Ascending aorta (tissue), 2 donors: ENCODE measurements at regions of chr3 and their contacts with region 1.

Region 1: DNA sequence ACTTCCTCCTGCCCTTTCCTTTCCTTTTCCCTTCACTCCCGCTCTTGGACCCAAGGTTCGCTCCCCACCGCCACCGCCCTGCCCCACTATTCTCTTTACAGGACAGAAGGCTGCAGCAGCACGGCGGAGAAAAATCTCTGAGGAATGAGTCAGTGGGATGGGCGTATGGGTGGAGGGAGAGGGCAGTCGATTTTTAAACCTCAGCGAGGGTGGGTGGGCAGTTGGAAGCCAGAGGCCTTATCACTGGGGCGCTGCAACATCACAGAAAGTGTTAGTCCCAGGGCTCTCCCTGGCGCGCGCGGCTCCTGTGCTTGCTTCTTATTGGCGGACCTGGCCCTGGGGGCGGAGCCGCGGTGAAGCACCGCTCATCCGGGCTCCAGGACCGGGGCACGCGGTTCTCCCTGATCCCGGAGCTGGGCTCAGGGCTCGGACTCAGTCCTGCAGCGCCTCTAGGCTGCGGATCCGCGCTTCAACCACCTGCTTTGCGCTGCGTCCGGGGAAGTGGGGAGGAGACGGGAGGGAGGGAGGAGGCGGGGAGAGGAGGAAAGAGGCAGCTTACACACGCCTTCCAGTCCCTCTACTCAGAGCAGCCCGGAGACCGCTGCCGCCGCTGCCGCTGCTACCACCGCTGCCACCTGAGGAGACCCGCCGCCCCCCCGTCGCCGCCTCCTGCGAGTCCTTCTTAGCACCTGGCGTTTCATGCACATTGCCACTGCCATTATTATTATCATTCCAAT is at the start of gene ALCAM:
- DNase-seq: peak; percentile 94 to 98
- H3K4me3 ChIP-seq: peak within 1 kb of the TSS; percentile 82 to 88
- H3K27ac ChIP-seq: peak within 1 kb of the TSS; percentile 91 to 96
- H3K4me1 ChIP-seq: peaks cover 0 to 29% of the 10 kb centered on the region in 2 donors
- H3K27me3 ChIP-seq: no peaks in the 10 kb centered on the region
- CTCF ChIP-seq: peak; percentile 69 to 82 (median 81)
- total RNA-seq, gene ALCAM: 26.1 TPM

Region 2: GRCh38 chr3:104273046-104273649 is 1093.3 kb before region 1 on chr3:
- intact Hi-C with region 1: loop called (anchors 1 kb)
- DNase-seq: no peak
- H3K4me3 ChIP-seq: no peak overlapping the region
- H3K27ac ChIP-seq: no peak overlapping the region
- H3K4me1 ChIP-seq: no peaks in the 10 kb centered on the region
- H3K27me3 ChIP-seq: no peaks in the 10 kb centered on the region
- CTCF ChIP-seq: peak; percentile 43 to 77 (median 76)

Region 3: DNA sequence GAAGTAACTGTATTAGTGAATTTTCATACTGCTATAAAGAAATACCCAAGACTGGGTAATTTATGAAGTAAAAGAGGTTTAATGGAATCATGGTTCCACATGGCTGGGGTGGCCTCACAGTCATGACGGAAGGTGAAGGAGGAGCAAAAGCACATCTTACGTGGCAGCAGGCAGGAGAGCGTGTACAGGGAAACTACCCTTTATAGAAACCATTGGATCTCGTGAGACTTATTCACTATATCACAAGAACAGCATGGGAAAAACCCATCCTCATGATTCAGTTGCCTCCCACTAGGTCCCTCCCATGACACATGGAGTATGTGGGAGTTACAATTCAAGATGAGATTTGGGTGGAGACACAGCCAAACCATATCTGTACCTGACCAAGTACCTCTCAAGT is 812.1 kb before region 1 on chr3:
- intact Hi-C with region 1: loop called (anchors 5 kb)
- DNase-seq: no peak
- H3K4me3 ChIP-seq: no peak overlapping the region
- H3K27ac ChIP-seq: peak overlapping the region; percentile 30 to 32
- H3K4me1 ChIP-seq: peaks cover 0 to 10% of the 10 kb centered on the region in 2 donors
- H3K27me3 ChIP-seq: no peaks in the 10 kb centered on the region
- CTCF ChIP-seq: no peak

Region 4: DNA sequence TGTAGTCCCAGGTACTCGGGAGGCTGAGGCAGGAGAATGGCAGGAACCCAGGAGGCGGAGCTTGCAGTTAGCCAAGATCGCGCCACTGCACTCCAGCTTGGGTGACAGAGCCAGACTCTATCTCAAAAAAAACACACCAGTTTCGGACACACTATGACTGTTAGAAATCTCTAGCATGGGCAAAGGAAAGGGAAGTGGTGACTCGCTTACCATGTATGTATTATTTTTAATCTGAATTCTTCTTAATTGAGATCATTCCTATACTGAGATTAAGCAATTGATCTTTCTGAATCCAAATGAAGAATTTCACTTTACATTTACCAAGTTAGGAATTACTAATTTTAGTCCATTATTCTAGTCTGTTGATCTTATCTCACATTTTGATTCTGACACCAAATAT is 459.0 kb before region 1 on chr3:
- intact Hi-C with region 1: loop called (anchors 1 kb)
- DNase-seq: no peak
- H3K4me3 ChIP-seq: no peak overlapping the region
- H3K27ac ChIP-seq: peak overlapping the region in 1 of 2 donors; percentile 56
- H3K4me1 ChIP-seq: peaks cover 0 to 3% of the 10 kb centered on the region in 2 donors
- H3K27me3 ChIP-seq: no peaks in the 10 kb centered on the region
- CTCF ChIP-seq: no peak

Region 5: DNA sequence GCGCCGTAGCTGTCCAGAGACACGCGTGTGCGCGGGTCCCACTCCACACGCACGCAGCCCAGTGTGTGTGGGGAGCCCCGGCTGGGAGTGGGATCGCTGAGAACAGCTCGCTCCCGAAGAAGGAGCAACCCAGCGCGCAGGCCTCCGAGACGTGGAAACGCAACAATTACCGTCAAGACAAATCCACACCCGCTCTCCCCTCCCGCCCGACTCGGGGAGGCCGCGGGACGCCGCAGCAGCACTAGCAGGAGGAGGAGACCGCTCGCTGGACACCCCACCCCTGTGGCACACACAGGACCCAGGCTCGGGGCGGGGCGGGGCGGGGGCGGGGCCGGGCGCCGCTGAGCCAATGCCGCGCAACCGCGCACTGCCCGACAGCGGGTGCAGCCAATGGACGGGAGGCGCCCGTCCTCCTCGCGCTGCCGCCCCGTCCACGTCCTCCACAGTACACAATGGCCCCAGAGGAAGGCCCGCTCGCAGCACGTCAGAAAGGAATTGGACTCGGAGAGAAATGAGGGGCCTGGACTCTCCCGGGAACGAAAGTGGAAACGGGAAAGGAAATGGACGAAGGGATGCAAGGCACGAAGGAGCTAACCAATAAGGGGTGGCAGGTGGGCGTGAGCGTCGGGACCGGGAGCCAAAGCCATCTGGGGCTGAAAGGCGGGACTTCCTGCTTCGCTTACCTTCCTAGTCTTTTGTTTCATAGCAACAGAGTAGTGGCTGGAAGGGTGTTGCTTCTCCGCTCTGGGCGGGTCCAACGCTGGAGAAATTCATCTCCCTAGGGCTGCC is 502.4 kb after region 1 on chr3 and contains the start of gene CBLB:
- intact Hi-C with region 1: loop called (anchors 5 kb)
- DNase-seq: peak; percentile 84 to 96
- H3K4me3 ChIP-seq: peak within 1 kb of the TSS; percentile 97 to 100
- H3K27ac ChIP-seq: peak within 1 kb of the TSS; percentile 98 to 99
- H3K4me1 ChIP-seq: peaks cover 0 to 18% of the 10 kb centered on the region in 2 donors
- H3K27me3 ChIP-seq: no peaks in the 10 kb centered on the region
- CTCF ChIP-seq: no peak
- total RNA-seq, gene CBLB: 30.0 TPM

Region 6: GRCh38 chr3:106609666-106610301 is 1243.3 kb after region 1 on chr3:
- intact Hi-C with region 1: loop called (anchors 5 kb)
- DNase-seq: peak in 1 of 2 donors; percentile 71
- H3K4me3 ChIP-seq: no peak overlapping the region
- H3K27ac ChIP-seq: no peak overlapping the region
- H3K4me1 ChIP-seq: no peaks in the 10 kb centered on the region
- H3K27me3 ChIP-seq: no peaks in the 10 kb centered on the region
- CTCF ChIP-seq: peak; percentile 68 to 88 (median 75)